AG04449 (cell line): ENCODE measurements at regions of chr11 and their contacts with region 1.

Region 1: DNA sequence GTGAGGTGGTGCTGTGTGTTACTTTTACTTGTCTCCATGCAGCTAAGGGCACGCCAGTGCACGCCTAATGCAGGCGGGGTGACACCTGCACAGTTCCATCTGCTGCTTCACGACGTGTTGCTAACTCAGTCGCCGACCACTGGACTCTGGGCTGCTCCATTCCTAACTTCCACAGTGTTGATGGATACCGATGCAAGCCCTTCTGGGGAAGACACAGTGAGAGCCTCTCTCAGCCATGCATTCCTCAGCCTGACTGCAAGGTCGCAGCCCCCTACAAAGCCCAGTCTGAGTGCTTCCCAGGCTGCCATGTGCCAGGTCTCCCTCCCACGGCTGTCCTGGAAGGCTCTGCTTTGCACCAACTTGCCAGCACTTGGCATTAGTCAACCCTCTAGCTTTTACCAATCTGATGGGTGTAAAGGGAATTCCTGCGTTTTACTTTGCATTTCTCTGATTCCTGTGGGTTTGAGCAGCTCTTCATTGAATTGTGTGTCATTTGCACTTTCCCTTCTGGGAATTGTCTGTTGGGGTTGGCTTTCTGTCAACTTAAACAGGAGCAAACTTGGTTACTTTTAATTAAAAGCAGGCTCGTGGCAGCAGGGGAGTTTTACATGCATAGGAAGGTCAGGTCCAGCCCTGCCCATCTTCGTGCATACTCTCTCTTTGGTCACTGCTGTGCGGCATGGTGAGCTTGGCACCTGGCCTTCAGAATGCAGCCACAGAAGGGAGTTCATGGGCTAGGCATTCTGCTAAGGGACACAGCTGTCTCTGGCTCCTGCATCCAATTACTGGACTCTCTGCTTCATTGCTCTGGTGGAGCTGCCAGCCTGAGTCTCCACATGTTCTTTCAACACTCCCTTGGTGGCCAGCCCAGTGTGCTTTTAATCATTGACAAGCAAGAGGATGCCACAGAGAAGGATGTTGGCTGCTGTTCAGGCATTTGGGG is 34.6 kb upstream of the SHANK2 start:
- DNase-seq: peak; percentile 96
- H3K4me3 ChIP-seq: no peak overlapping the region
- CTCF ChIP-seq: no peak

Region 2: DNA sequence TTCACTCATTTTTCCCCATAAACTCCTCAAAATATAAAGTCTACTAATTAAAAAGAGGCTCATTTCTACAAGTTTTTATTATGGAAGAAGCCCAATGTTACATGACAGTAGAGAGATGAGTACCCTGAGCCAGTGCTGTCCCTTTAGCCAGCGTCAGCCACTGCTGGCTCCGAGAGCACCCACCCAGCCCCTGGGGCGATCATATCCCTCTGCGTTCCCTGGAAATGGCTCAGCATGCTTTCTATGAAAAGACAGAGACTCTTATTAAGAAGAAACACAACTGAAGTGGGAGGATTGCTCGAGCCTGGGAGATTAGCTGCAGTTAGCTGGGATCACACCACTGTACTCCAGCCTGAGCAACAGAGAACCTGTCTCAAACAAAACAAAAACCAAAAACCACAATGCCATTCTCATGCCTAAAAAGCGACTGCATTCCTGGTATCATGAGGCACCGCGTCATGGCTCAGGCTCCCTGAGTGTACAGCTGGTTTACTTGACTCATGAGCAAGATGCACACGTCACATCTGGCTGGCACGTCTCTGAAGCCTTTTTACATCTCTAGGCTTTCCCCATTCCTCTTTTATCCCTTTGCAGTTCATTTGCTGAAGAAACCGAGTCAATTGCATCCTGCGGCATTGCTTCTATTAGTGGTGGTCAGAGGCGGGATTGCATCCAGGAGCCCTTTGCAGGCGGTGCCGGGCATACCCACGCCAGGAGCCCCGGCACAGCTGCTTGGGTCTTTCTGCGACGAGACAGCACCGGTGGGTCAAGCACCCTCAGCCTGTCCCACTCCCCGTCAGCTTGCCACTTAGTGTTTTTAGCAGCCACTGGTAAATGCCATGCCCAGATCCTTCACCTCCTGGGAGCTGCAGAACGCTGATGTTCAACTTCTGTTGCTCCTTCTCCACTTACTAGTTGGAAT is 768.7 kb before region 1 on chr11:
- CTCF ChIA-PET with region 1: no interaction called
- POLR2A ChIA-PET with region 1: no interaction called
- DNase-seq: peak; percentile 38
- H3K4me3 ChIP-seq: no peak overlapping the region
- CTCF ChIP-seq: no peak

Region 3: DNA sequence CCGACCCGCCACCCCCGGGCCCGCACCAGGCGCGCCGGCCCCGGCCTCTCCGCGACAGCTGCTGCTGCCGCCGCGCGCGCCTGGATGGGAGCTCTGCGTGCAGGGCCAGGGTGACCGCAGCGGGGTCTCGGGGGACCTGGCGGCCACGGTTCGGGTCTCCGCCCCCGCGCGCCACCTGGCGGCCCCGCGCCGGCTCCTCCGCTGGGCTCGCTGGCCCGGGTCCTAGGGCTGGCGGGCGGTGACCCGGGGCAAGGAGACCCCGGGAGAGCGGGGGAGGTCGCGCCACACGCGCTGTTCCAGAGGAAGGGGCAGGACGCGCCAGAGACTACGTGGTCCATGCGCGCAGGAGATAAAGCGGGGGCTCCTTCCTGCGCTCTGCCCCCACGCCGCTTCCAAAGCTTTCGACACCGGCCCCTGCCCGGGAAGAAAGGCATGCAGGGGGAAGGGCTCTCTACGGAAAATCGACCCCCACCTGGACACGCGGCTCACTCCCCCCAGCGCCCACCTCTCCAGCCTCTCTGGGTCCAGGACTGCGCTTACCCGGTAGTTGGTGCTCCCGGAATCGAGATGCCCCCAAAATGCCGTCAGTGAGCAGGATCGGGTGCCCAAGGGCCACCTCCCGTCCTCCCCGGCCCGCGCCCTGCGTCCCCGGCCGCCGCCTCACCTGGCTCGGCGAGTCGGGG is 35.1 kb before region 1 on chr11:
- CTCF ChIA-PET with region 1: no interaction called
- POLR2A ChIA-PET with region 1: interaction called, 13 read pairs
- DNase-seq: no peak
- H3K4me3 ChIP-seq: peak overlapping the region; percentile 43
- CTCF ChIP-seq: no peak

Region 4: GRCh38 chr11:71301046-71301857 is 14.3 kb after region 1 on chr11:
- CTCF ChIA-PET with region 1: interaction called, 8 read pairs
- POLR2A ChIA-PET with region 1: interaction called, 50 read pairs
- DNase-seq: no peak
- H3K4me3 ChIP-seq: no peak overlapping the region
- CTCF ChIP-seq: no peak